ENCODE measurements at regions of chr2 and their contacts with region 1.

Region 1: DNA sequence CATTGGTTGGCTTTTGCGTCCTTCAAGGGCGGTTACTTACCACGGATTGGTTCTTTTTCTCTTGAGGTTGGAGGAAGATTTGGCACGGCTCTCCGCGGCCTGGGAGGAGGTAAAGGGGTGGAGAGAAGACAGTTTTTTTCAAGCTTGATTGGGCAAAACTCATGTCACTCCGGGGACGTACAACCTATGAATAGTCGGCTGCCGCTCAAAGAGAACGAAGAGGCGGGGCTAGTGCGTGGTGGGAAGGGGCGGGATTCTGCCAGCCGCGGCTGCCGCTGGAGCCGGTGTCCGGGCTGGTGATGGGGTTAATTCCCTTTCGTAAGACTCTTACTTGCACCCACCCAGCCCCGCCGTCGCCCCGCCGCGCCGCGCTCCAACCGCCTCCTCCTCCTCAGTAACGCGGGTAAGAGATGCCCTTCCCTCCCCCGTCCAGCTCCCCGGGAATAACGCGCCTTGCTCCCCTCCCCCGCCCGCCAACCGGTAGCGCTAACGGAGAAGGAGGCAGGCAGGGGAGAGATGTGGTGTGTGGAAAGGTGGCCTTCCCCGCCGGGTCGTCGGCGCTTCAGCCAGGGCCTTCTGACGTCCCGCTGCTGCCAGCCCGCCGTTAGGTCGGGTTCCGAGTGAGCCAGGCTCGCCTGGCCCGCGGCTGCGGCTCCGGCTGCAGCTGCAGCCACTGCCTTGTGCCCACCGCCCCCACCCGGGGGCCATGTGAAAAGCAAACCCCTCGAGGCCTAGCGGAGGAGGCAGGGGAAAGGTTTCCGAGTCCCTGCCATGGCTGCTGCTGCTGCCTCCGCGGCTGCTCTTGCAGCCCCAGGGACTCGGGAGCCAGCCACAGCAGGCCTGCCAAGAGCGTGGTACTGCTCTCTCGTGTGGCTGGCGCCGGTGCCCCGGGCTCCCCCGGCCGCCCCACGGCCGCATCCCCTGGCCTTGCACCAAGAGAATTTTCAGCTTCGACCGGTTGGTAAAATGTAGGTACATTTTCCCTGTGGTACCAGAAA is at the start of gene R3HDM1:
- DNase-seq: peak; percentile 87
- ATAC-seq: peak; percentile 82
- H3K4me3 Mint-ChIP-seq: no peak within 1 kb of the TSS
- H3K27ac Mint-ChIP-seq: no peak within 1 kb of the TSS
- H3K4me1 Mint-ChIP-seq: peaks cover 31% of the 10 kb centered on the region
- H3K27me3 Mint-ChIP-seq: no peaks in the 10 kb centered on the region
- total RNA-seq, gene R3HDM1: 48.4 to 48.7 TPM

Region 2: GRCh38 chr2:134918526-134919340 is 612.8 kb before region 1 on chr2 and contains the start of gene CCNT2:
- POLR2A ChIA-PET with region 1: interaction called, 10 read pairs
- DNase-seq: peak; percentile 100
- ATAC-seq: peak; percentile 88
- H3K4me3 Mint-ChIP-seq: peak within 1 kb of the TSS; percentile 97
- H3K27ac Mint-ChIP-seq: peak within 1 kb of the TSS; percentile 96
- H3K4me1 Mint-ChIP-seq: peaks cover 15% of the 10 kb centered on the region
- H3K27me3 Mint-ChIP-seq: no peaks in the 10 kb centered on the region
- total RNA-seq, gene CCNT2: 48.3 to 50.3 TPM

Region 3: GRCh38 chr2:135052042-135052876 is 479.3 kb before region 1 on chr2 and contains the start of gene RAB3GAP1:
- POLR2A ChIA-PET with region 1: interaction called, 17 read pairs
- DNase-seq: peak; percentile 92
- ATAC-seq: peak; percentile 80
- H3K4me3 Mint-ChIP-seq: peak within 1 kb of the TSS; percentile 96
- H3K27ac Mint-ChIP-seq: peak within 1 kb of the TSS; percentile 99
- H3K4me1 Mint-ChIP-seq: peaks cover 34% of the 10 kb centered on the region
- H3K27me3 Mint-ChIP-seq: peaks cover 3% of the 10 kb centered on the region
- total RNA-seq, gene RAB3GAP1: 22.9 to 24.0 TPM

Region 4: DNA sequence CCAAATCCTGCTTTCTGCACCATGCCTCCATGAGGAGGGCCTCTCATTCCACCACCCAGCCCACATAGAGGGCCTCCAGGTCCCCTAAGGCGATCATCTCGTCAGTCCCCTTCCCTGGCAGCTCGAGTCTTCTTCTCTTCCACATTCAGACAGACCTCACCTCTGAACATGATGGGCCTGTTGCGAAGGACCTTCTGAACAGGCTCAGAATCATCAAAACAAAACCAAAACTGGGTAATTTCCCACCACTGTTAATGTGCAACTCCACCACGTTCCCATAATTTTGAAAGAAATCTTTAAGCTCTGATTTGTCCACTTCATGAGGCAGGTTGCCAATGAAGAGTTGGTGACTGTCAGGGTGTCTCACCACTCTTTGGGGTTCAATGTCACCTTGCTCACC is 21.0 kb before region 1 on chr2:
- POLR2A ChIA-PET with region 1: no interaction called
- DNase-seq: no peak
- ATAC-seq: no peak
- H3K4me3 Mint-ChIP-seq: no peak overlapping the region
- H3K27ac Mint-ChIP-seq: no peak overlapping the region
- H3K4me1 Mint-ChIP-seq: peaks cover 4% of the 10 kb centered on the region
- H3K27me3 Mint-ChIP-seq: peaks cover 2% of the 10 kb centered on the region

Region 5: GRCh38 chr2:135546436-135546835 is 14.9 kb after region 1 on chr2:
- POLR2A ChIA-PET with region 1: no interaction called
- DNase-seq: no peak
- ATAC-seq: peak; percentile 45
- H3K4me3 Mint-ChIP-seq: no peak overlapping the region
- H3K27ac Mint-ChIP-seq: no peak overlapping the region
- H3K4me1 Mint-ChIP-seq: peaks cover 11% of the 10 kb centered on the region
- H3K27me3 Mint-ChIP-seq: no peaks in the 10 kb centered on the region